ENCODE measurements at regions of chr4 and their contacts with region 1.

Region 1: DNA sequence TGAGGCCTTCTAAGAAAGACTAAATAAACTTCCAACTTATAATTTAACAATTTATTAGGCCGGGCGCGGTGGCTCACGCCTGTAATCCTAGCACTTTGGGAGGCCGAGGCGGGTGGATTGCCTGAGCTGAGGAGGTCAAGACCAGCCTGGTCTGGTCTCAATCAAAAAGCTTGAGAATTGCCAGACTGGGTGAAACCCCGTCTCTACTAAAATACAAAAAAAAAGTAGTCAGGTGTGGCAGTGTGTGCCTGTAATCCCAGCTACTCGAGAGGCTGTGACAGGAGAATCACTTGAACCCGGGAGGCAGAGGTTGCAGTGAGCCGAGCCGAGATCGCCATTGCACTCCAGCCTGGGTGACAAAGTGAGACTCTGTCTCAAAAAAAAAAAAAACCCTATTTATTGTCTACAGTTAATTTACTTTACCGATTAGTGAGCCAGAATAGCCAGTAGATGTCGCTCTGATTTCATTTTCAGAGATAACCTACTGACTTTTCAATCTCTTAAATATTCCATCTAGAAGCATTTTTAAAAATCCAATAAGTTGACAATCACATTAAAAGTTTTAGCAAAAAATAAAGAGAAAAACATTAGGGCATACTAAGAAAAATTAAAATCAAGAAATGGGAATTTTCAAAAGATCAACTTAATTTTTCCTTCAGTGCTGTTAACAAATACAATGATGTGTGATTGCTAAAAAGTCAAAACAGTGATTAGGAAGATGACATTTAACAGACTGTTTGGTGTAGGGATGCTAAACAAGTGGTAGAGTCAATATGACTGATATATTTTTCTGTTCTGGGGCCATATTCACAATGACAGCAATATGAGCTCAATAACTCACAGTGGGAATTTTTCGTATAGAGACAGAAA is 4.3 kb upstream of the SHROOM3 start:
- DNase-seq: peak; percentile 27
- H3K4me3 ChIP-seq: no peak overlapping the region
- H3K27ac ChIP-seq: no peak overlapping the region
- H3K4me1 ChIP-seq: no peaks in the 10 kb centered on the region
- H3K27me3 ChIP-seq: no peaks in the 10 kb centered on the region
- CTCF ChIP-seq: peak; percentile 57

Region 2: DNA sequence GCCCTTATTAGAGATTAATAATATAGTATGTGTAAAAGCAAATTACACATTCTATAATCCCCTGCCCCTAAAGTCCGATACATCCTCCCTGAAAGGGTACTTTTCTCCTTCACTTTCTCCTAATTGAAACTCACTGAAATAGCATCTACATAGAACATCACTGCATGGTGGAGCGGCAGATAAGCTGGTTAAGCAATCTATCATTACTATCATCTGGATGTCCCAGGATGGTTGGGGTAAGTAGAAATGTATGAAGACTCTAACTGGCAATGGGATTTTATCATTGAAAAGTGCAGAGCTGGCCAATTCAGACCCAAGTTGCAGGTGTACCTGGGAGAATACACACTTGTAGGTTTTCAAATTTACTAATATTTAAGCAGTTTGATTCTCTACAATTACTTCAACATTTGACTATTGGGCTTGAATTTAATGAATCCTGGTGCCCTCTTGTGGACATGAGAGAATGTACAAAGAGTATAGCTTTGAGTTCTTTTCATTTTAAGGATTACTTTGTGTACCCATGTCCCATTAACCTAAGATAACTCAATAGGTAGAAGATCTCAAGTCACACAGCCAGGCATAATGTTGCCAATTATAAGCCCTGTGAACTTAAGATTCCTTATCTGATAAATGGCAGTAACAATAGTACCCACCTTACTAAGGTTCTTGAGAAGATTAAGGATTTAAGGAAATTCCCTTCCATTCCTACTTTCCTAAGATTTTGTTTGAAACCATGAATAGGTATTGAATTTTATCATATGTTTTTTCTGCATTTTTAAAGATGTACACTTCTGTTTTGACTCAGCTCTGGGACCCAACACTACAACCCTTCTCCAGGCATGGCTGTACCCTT is 74.1 kb after region 1 on chr4:
- intact Hi-C with region 1: loop called (anchors 2 kb)
- DNase-seq: no peak
- H3K4me3 ChIP-seq: no peak overlapping the region
- H3K27ac ChIP-seq: no peak overlapping the region
- H3K4me1 ChIP-seq: no peaks in the 10 kb centered on the region
- H3K27me3 ChIP-seq: no peaks in the 10 kb centered on the region
- CTCF ChIP-seq: peak; percentile 57

Region 3: DNA sequence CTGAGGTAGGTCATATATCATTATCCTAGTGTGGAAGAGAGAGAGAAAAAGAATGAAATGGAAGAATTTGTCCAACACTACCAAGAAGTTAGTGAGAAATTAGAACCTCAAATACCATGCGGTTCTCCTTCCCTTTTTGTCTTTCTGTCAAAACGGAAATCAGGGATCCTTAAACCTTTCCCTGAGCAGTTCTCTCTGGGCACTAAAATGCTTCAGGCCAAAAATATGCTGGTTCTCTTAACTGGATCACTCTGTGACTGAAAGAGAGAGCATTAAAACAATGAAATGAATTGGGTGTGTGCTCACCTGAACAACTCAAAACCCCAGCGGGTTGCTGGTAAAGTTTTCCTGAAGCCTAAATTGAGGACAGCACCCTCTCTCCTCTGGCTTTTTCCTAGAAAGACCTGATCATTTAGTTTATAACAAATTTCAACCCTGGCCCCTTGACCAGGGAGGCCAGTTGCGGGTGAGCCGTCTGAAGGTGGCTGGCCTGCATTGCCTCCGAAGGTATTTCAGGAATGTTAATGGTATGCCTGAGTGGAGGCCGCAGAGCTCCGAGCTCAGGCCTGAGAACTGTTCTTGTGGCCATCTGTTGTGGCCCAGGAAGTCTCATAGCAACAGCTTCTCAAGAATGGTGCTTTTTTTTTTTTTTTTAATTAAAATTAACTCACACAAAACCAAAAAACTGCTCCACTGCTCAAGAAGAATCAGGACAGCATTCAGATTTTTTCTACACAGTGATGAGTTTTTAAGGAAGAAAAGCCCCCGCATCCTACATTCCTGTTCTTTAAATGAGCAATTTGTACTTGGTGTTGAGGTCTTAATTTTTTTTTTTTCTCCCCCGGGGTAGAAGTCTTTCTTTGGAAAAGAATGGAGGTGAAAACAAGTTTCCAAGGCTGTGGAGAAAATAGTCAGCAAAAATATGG is 159.4 kb after region 1 on chr4:
- intact Hi-C with region 1: no loop called
- DNase-seq: peak; percentile 54
- H3K4me3 ChIP-seq: no peak overlapping the region
- H3K27ac ChIP-seq: peak overlapping the region; percentile 74
- H3K4me1 ChIP-seq: peaks cover 3% of the 10 kb centered on the region
- H3K27me3 ChIP-seq: no peaks in the 10 kb centered on the region
- CTCF ChIP-seq: no peak

Region 4: GRCh38 chr4:76748649-76749048 is 317.9 kb after region 1 on chr4:
- intact Hi-C with region 1: loop called (anchors 5 kb)
- DNase-seq: peak; percentile 76
- H3K4me3 ChIP-seq: no peak overlapping the region
- H3K27ac ChIP-seq: no peak overlapping the region
- H3K4me1 ChIP-seq: no peaks in the 10 kb centered on the region
- H3K27me3 ChIP-seq: no peaks in the 10 kb centered on the region
- CTCF ChIP-seq: no peak